Calu3 (cell line): ENCODE measurements at regions of chr15 and their contacts with region 1.

Region 1: GRCh38 chr15:70892002-70892914 is at the starts of genes LRRC49 and THAP10:
- DNase-seq: peak; percentile 94
- H3K4me3 Mint-ChIP-seq: peak within 1 kb of the TSS; percentile 97
- H3K27ac Mint-ChIP-seq: peak within 1 kb of the TSS; percentile 100
- H3K4me1 Mint-ChIP-seq: peaks cover 34% of the 10 kb centered on the region
- H3K27me3 Mint-ChIP-seq: no peaks in the 10 kb centered on the region
- CTCF ChIP-seq: no peak
- total RNA-seq, gene LRRC49: 5.8 and 6.3 TPM in 2 replicates
- total RNA-seq, gene THAP10: 11.8 and 13.7 TPM in 2 replicates

Region 2: GRCh38 chr15:70907784-70908471 is 15.7 kb after region 1 on chr15:
- CTCF ChIA-PET with region 1: no interaction called
- intact Hi-C with region 1: no loop called
- DNase-seq: no peak
- H3K4me3 Mint-ChIP-seq: no peak overlapping the region
- H3K27ac Mint-ChIP-seq: no peak overlapping the region
- H3K4me1 Mint-ChIP-seq: peaks cover under 1% of the 10 kb centered on the region
- H3K27me3 Mint-ChIP-seq: no peaks in the 10 kb centered on the region
- CTCF ChIP-seq: peak; percentile 50

Region 3: GRCh38 chr15:71109130-71109529 is 216.9 kb after region 1 on chr15:
- CTCF ChIA-PET with region 1: no interaction called
- intact Hi-C with region 1: loop called (anchors 5 kb)
- DNase-seq: no peak
- H3K4me3 Mint-ChIP-seq: no peak overlapping the region
- H3K27ac Mint-ChIP-seq: no peak overlapping the region
- H3K4me1 Mint-ChIP-seq: peaks cover 15% of the 10 kb centered on the region
- H3K27me3 Mint-ChIP-seq: no peaks in the 10 kb centered on the region
- CTCF ChIP-seq: no peak